ENCODE measurements at regions of chr18 and their contacts with region 1.

Region 1: GRCh38 chr18:8696749-8697211 is 8.6 kb upstream of the MTCL1 start:
- DNase-seq: peak; percentile 70 to 89 (median 86)
- ATAC-seq: peak; percentile 89 to 93
- H3K4me3 ChIP-seq: no peak overlapping the region
- H3K27ac ChIP-seq: no peak overlapping the region
- H3K4me1 ChIP-seq: no peaks in the 10 kb centered on the region
- H3K27me3 ChIP-seq: no peaks in the 10 kb centered on the region

Region 2: GRCh38 chr18:8601277-8602032 is 95.3 kb before region 1 on chr18:
- intact Hi-C with region 1: no loop called
- DNase-seq: no peak
- ATAC-seq: no peak
- H3K4me3 ChIP-seq: no peak overlapping the region
- H3K27ac ChIP-seq: no peak overlapping the region
- H3K4me1 ChIP-seq: no peaks in the 10 kb centered on the region
- H3K27me3 ChIP-seq: no peaks in the 10 kb centered on the region

Region 3: GRCh38 chr18:8982416-8983184 is 285.8 kb after region 1 on chr18:
- intact Hi-C with region 1: loop called (anchors 5 to 10 kb)
- DNase-seq: no peak
- ATAC-seq: peak; percentile 48 to 61
- H3K4me3 ChIP-seq: no peak overlapping the region
- H3K27ac ChIP-seq: no peak overlapping the region
- H3K4me1 ChIP-seq: no peaks in the 10 kb centered on the region
- H3K27me3 ChIP-seq: no peaks in the 10 kb centered on the region

Measured in right cardiac atrium (tissue), 5 donors.